ENCODE measurements at regions of chr21 and their contacts with region 1.

Region 1: DNA sequence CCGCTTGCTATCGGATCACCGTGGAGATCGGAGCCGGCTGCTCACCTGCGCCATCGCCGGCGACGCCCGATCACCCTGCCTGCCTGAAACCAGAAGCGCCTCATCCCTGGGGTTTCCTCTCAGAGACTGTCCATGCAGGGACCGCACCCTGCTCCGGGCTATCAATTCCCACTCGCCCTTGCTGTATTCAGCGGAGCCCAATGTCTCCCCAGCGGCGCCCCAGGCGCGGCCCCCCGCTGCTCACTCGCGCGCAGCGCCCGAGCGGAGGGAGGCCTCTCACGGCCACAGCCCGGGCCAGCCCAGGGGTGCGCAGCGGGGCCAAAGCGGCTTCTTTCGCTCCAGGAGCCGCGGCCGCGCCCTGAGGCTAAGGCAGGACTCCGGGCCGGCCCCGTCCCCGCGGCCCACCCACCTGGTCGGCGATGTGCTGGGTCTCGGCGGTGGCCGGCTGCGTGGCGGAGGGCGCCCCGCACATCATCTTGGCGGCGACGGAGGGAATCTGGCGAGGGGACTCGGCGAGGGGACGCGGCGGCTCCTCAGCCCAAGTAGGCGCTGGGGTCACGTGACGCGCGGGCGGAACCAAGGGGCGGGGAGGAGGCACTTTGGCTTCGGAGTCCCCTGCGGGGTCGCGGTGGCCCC is at the start of gene CSTB:
- DNase-seq: peak; percentile 47 to 86
- H3K4me3 ChIP-seq: peak within 1 kb of the TSS; percentile 79
- H3K27ac ChIP-seq: peak within 1 kb of the TSS; percentile 88 to 93
- H3K4me1 ChIP-seq: peaks cover 0 to 12% of the 10 kb centered on the region in 2 donors
- H3K27me3 ChIP-seq: no peaks in the 10 kb centered on the region
- CTCF ChIP-seq: no peak
- total RNA-seq, gene CSTB: 8.7 TPM

Region 2: GRCh38 chr21:42677339-42678321 is 1098.3 kb before region 1 on chr21:
- intact Hi-C with region 1: no loop called
- DNase-seq: no peak
- H3K4me3 ChIP-seq: no peak overlapping the region
- H3K27ac ChIP-seq: no peak overlapping the region
- H3K4me1 ChIP-seq: no peaks in the 10 kb centered on the region
- H3K27me3 ChIP-seq: no peaks in the 10 kb centered on the region
- CTCF ChIP-seq: no peak

Region 3: GRCh38 chr21:43659136-43660000 is 116.5 kb before region 1 on chr21 and contains the starts of genes HSF2BP and RRP1B:
- intact Hi-C with region 1: loop called (anchors 1 kb)
- DNase-seq: peak in 1 of 2 donors; percentile 88
- H3K4me3 ChIP-seq: peak within 1 kb of the TSS; percentile 90 to 95
- H3K27ac ChIP-seq: peak within 1 kb of the TSS; percentile 76 to 86
- H3K4me1 ChIP-seq: peaks cover 3 to 11% of the 10 kb centered on the region in 2 donors
- H3K27me3 ChIP-seq: no peaks in the 10 kb centered on the region
- CTCF ChIP-seq: peak in 1 of 3 experiments; percentile 5
- total RNA-seq, gene HSF2BP: 0.75 TPM
- total RNA-seq, gene RRP1B: 10.6 TPM

Region 4: DNA sequence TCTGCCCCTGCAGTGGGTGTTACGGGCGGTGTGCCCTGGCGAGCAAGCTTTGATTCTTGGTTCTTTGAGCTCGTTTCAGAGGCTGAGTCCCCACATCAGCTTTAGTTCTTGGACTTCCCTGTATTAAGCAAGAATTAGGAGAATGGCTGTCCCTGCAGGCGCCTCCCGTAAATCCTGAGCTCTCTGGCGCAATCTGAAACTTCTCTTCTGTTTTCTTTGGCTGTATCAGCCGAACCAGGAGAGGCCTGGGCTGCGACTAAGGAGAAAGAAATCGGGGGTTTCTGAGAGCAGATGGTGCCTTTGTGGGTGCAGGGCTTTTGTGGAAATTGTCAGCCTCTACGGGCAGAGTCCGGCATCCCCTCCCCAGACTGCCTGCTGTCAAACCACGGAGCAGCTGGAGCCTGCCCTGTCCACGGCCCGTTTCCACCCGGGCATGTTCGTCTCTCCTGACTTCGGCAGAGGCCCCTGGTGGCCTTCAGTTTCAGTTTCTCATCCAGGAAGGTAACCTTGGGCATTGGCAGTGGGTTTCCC is 17.7 kb before region 1 on chr21:
- intact Hi-C with region 1: loop called (anchors 1 kb)
- DNase-seq: peak in 1 of 2 donors; percentile 78
- H3K4me3 ChIP-seq: peak overlapping the region; percentile 11 to 56
- H3K27ac ChIP-seq: peak overlapping the region; percentile 71 to 81
- H3K4me1 ChIP-seq: peaks cover 9 to 15% of the 10 kb centered on the region in 2 donors
- H3K27me3 ChIP-seq: no peaks in the 10 kb centered on the region
- CTCF ChIP-seq: no peak

Region 5: DNA sequence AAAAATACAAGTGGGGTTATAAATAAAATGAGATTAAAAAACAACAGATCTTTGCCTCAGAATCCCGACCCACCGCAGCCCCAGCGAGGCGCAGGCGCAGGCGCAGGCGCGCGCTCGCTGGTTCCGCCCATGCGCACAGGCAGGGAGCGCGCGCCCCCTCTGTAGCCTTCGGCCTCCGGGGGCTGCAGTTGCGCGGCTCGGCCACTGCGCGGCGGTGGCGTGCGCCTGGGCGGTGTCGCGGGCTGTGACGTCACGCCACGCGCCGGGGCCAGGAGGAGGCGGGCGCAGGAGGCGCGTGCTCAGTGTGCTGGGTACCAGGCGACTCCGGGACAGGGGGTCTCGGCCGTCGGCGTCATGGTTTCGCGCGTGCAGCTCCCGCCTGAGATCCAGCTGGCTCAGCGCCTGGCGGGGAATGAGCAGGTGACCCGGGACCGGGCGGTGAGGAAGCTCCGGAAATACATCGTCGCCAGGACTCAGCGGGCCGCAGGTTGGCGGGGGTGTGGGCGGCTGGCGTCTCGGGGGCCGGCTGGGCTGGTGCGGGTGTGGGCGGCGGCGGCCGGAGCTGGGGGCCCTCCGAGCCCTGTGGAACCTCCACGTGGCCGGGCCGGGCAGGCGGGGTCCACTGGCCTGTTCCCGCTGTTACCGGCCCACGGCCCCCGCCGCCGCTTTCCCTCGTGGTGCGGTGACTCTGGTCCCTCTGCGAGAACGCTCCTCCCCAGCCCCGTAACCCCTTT is 13.5 kb after region 1 on chr21 and contains the start of gene RRP1:
- intact Hi-C with region 1: loop called (anchors 1 kb)
- DNase-seq: peak; percentile 56 to 95
- H3K4me3 ChIP-seq: peak within 1 kb of the TSS; percentile 77 to 95
- H3K27ac ChIP-seq: peak within 1 kb of the TSS; percentile 78 to 84
- H3K4me1 ChIP-seq: peaks cover 6 to 14% of the 10 kb centered on the region in 2 donors
- H3K27me3 ChIP-seq: no peaks in the 10 kb centered on the region
- CTCF ChIP-seq: peak; percentile 81 to 100 (median 98)
- total RNA-seq, gene RRP1: 52.0 TPM

Region 6: GRCh38 chr21:43810505-43811261 is 34.8 kb after region 1 on chr21:
- intact Hi-C with region 1: no loop called
- DNase-seq: peak; percentile 39 to 87
- H3K4me3 ChIP-seq: no peak overlapping the region
- H3K27ac ChIP-seq: no peak overlapping the region
- H3K4me1 ChIP-seq: peaks cover 0 to 6% of the 10 kb centered on the region in 2 donors
- H3K27me3 ChIP-seq: no peaks in the 10 kb centered on the region
- CTCF ChIP-seq: peak; percentile 85 to 93 (median 89)

Region 7: GRCh38 chr21:43825681-43826622 is 50.0 kb after region 1 on chr21:
- intact Hi-C with region 1: no loop called
- DNase-seq: no peak
- H3K4me3 ChIP-seq: no peak overlapping the region
- H3K27ac ChIP-seq: no peak overlapping the region
- H3K4me1 ChIP-seq: no peaks in the 10 kb centered on the region
- H3K27me3 ChIP-seq: no peaks in the 10 kb centered on the region
- CTCF ChIP-seq: no peak